ENCODE measurements at regions of chr17 and their contacts with region 1.

Region 1: GRCh38 chr17:2592971-2593820 is at the start of gene PAFAH1B1:
- DNase-seq: peak; percentile 92 to 95
- ATAC-seq: peak; percentile 84 to 85
- H3K4me3 ChIP-seq: peak within 1 kb of the TSS; percentile 84
- H3K27ac ChIP-seq: peak within 1 kb of the TSS; percentile 98
- H3K4me1 ChIP-seq: peaks cover 37% of the 10 kb centered on the region
- CTCF ChIP-seq: peak; percentile 23; the same call in 1 of the 3 replicates
- EP300 ChIP-seq: no peak; a peak in 1 of 5 replicates
- POLR2A ChIP-seq: peak; percentile 98
- RAD21 ChIP-seq: peak in 1 of 2 experiments; percentile 48; a peak in 3 of 5 replicates
- polyA plus RNA-seq, gene PAFAH1B1: 197 and 204 TPM in 2 replicates

Region 2: DNA sequence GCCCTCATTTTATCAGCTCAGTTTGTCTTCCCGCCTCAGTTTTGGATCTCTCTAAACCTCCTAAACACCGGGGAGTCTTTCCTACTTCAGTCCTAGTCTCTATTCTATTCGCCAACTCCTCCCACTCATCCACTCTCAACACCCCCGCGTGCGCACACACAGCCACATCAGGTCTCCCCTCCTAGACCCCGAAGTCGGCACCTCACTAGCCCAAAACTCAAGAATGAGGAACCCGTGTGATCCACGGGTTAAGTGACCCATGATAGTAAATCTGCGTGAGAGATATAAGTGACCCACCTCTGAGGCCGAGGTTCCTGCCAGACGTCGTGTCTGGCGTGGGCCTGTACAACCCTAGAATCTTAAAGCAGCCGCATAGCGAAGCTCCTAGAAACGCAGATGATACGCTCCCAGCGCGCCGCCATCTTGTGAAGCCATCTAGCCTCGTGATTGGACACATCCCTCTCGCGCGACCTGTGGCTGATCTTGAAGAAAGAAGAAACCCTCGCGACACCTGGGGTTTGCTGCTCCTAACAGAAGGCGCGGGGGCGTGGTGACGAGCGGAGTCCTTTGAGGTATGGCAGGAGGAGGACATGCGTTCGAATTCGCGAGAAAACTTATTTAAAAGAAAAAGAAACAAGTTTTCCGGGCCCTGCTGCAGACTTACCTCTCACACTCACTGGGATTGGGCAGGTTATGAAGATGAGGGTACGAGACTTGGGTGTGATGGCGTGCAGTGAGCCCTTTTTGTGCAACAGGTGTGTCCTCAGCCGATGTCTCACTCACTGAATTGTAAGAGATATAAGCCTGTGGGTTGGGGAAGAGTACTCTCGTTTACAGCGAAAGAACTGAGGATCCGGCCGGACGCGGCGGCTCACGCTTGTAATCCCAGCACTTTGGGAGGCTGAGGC is 81.5 kb before region 1 on chr17 and contains the start of gene METTL16:
- CTCF ChIA-PET with region 1: interaction called, 3 read pairs
- POLR2A ChIA-PET with region 1: interaction called, 31 read pairs
- DNase-seq: peak; percentile 99
- ATAC-seq: peak; percentile 99
- H3K4me3 ChIP-seq: peak within 1 kb of the TSS; percentile 79
- H3K27ac ChIP-seq: peak within 1 kb of the TSS; percentile 89 to 97
- H3K4me1 ChIP-seq: peaks cover 16% of the 10 kb centered on the region
- CTCF ChIP-seq: no peak
- EP300 ChIP-seq: no peak
- POLR2A ChIP-seq: peak; percentile 76
- RAD21 ChIP-seq: no peak
- polyA plus RNA-seq, gene METTL16: 58.0 and 58.4 TPM in 2 replicates

Region 3: GRCh38 chr17:2547176-2547575 is 46.0 kb before region 1 on chr17:
- CTCF ChIA-PET with region 1: no interaction called
- POLR2A ChIA-PET with region 1: interaction called, 11 read pairs
- DNase-seq: peak; percentile 49 to 60
- ATAC-seq: peak; percentile 82 to 94
- H3K4me3 ChIP-seq: no peak overlapping the region
- H3K27ac ChIP-seq: no peak overlapping the region
- H3K4me1 ChIP-seq: peaks cover 14% of the 10 kb centered on the region
- CTCF ChIP-seq: no peak
- EP300 ChIP-seq: no peak
- POLR2A ChIP-seq: no peak
- RAD21 ChIP-seq: no peak

Region 4: GRCh38 chr17:2634361-2634960 is 41.3 kb after region 1 on chr17:
- CTCF ChIA-PET with region 1: no interaction called
- POLR2A ChIA-PET with region 1: no interaction called
- DNase-seq: peak; percentile 56 to 68
- ATAC-seq: peak; percentile 56 to 62; a peak in 5 of 6 replicates
- H3K4me3 ChIP-seq: no peak overlapping the region
- H3K27ac ChIP-seq: peak overlapping the region in 1 of 2 experiments; percentile 31; a peak in 2 of 6 replicates
- H3K4me1 ChIP-seq: peaks cover 45% of the 10 kb centered on the region
- CTCF ChIP-seq: no peak
- EP300 ChIP-seq: no peak
- POLR2A ChIP-seq: no peak
- RAD21 ChIP-seq: no peak

Region 5: DNA sequence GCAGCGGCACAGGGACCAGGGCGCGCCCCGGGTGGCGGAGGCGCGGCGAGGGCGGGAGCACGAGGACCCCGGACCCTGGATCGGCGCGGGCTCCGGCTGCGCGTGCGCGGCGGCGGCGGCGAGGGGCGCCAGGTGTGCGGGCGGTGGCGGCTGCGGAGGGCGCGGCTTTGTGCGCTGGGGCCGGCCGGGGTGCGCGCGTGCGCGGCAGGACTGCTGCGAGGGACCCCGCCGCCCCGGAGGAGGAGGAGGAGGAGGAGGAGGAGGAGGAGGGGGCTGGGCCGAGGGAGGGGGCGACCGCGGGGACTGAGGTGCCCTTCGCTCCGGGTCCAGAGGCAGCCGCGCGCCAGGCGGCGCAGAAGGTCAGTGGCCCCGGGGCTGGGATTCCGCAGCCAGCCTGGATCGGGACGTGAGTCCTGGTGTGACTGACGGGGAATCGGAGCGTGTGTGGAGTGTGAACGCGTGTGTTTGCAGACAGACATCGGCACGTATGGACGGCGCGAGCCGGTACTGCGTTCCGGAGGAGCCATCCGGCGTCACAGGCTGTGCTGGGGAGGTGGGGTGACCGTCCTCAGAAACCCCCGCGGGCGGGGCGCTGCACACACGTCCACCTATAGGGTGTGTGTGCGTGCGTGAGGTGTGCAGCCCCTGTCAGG is 183.5 kb after region 1 on chr17:
- CTCF ChIA-PET with region 1: no interaction called
- POLR2A ChIA-PET with region 1: no interaction called
- DNase-seq: peak in 1 of 2 experiments; percentile 46
- ATAC-seq: peak; percentile 55 to 68
- H3K4me3 ChIP-seq: peak overlapping the region; percentile 62
- H3K27ac ChIP-seq: peak overlapping the region; percentile 46 to 75; a peak in 4 of 6 replicates
- H3K4me1 ChIP-seq: peaks cover 5% of the 10 kb centered on the region
- CTCF ChIP-seq: no peak
- EP300 ChIP-seq: no peak
- POLR2A ChIP-seq: no peak
- RAD21 ChIP-seq: no peak

Measured in A549 (cell line).